H1 (cell line): ENCODE measurements at regions of chr6 and their contacts with region 1.

Region 1: DNA sequence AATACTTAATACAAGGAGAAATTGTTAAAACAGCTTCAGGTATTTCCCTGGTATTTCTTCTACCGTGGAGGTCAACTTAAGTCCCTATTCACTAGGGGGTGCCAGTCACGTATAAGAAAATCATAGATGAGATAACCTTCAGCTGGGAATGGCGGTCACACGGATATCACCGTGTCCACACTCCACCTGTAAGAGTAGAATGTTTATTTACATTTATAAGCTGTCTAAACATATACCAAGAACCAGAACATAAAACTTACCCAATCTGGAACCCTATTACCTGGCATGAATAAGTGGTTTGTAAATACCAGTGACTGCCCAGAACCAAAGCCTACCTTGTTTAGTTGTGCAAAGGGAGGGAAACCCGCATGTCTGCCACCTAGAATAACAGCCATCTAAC is 1.9 kb upstream of the ELOVL4 start:
- DNase-seq: peak in 1 of 2 experiments; percentile 72
- H3K4me3 ChIP-seq: peak overlapping the region in 1 of 4 experiments; percentile 25; a peak in 1 of 8 replicates
- H3K27ac ChIP-seq: no peak overlapping the region
- H3K4me1 ChIP-seq: peaks cover 0 to 7% (median 4%) of the 10 kb centered on the region in 4 experiments; a peak in 4 of 7 replicates
- H3K27me3 ChIP-seq: no peaks in the 10 kb centered on the region; a peak in 2 of 7 replicates
- CTCF ChIP-seq: peak in 2 of 3 experiments; percentile 60 to 71; a peak in 3 of 4 replicates
- EP300 ChIP-seq: no peak
- POLR2A ChIP-seq: no peak
- RAD21 ChIP-seq: peak; percentile 77 to 82

Region 2: GRCh38 chr6:79869600-79870084 is 79.6 kb before region 1 on chr6:
- CTCF ChIA-PET with region 1: interaction called, 10 read pairs
- POLR2A ChIA-PET with region 1: no interaction called
- DNase-seq: peak; percentile 59 to 92
- H3K4me3 ChIP-seq: peak overlapping the region in 1 of 4 experiments; percentile 26; a peak in 1 of 8 replicates
- H3K27ac ChIP-seq: no peak overlapping the region
- H3K4me1 ChIP-seq: peaks cover 2 to 4% (median 4%) of the 10 kb centered on the region in 4 experiments; a peak in 4 of 7 replicates
- H3K27me3 ChIP-seq: peaks cover 0 to 3% (median 0%) of the 10 kb centered on the region in 4 experiments; a peak in 1 of 7 replicates
- CTCF ChIP-seq: peak; percentile 86 to 94 (median 92)
- EP300 ChIP-seq: no peak
- POLR2A ChIP-seq: no peak
- RAD21 ChIP-seq: peak; percentile 70 to 82

Region 3: DNA sequence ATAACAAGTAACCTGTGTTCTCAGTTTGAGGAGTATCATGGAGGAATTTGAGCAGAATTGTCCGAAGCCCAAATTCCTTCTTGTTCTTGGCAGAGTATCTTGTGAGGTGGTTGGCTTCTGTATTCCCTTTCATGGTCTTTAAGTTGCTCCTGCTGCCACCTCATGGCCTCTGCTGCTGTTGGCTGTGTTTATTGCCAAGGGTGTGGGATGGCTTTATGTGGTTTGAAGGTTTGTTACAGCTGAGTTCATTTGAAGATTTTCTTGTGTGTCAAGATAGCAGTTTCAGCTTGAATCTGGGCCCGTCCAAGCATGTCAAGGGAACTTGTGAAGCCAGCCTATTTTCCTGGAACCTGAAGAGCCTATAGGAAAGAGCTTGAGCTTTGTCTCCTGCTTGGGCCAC is 35.0 kb after region 1 on chr6:
- CTCF ChIA-PET with region 1: interaction called, 27 read pairs
- POLR2A ChIA-PET with region 1: interaction called, 3 read pairs
- DNase-seq: no peak
- H3K4me3 ChIP-seq: no peak overlapping the region
- H3K27ac ChIP-seq: no peak overlapping the region
- H3K4me1 ChIP-seq: no peaks in the 10 kb centered on the region
- H3K27me3 ChIP-seq: no peaks in the 10 kb centered on the region
- CTCF ChIP-seq: peak; percentile 13 to 44 (median 36); a peak in 3 of 4 replicates
- EP300 ChIP-seq: no peak
- POLR2A ChIP-seq: no peak
- RAD21 ChIP-seq: peak; percentile 26 to 35; a peak in 2 of 4 replicates

Region 4: GRCh38 chr6:80004173-80005072 is 55.2 kb after region 1 on chr6 and contains the start of gene TTK:
- CTCF ChIA-PET with region 1: interaction called, 13 read pairs
- POLR2A ChIA-PET with region 1: interaction called, 12 read pairs
- DNase-seq: peak; percentile 75 to 88
- H3K4me3 ChIP-seq: peak within 1 kb of the TSS; percentile 72 to 92 (median 84)
- H3K27ac ChIP-seq: peak within 1 kb of the TSS; percentile 93
- H3K4me1 ChIP-seq: peaks cover 0 to 4% (median 3%) of the 10 kb centered on the region in 4 experiments; a peak in 4 of 7 replicates
- H3K27me3 ChIP-seq: no peaks in the 10 kb centered on the region
- CTCF ChIP-seq: no peak
- EP300 ChIP-seq: no peak
- POLR2A ChIP-seq: peak in 1 of 2 experiments; percentile 79; a peak in 2 of 3 replicates
- RAD21 ChIP-seq: no peak
- total RNA-seq, gene TTK: 62.2 and 63.2 TPM in 2 replicates

Region 5: GRCh38 chr6:80077067-80077466 is 127.8 kb after region 1 on chr6:
- CTCF ChIA-PET with region 1: interaction called, 10 read pairs
- POLR2A ChIA-PET with region 1: no interaction called
- DNase-seq: no peak
- H3K4me3 ChIP-seq: no peak overlapping the region
- H3K27ac ChIP-seq: no peak overlapping the region
- H3K4me1 ChIP-seq: peaks cover 0 to 4% (median 0%) of the 10 kb centered on the region in 4 experiments; a peak in 2 of 7 replicates
- H3K27me3 ChIP-seq: no peaks in the 10 kb centered on the region
- CTCF ChIP-seq: no peak
- EP300 ChIP-seq: no peak
- POLR2A ChIP-seq: no peak
- RAD21 ChIP-seq: no peak